Colonic mucosa (tissue), 4 donors: ENCODE measurements at regions of chrX and their contacts with region 1.

Region 1: DNA sequence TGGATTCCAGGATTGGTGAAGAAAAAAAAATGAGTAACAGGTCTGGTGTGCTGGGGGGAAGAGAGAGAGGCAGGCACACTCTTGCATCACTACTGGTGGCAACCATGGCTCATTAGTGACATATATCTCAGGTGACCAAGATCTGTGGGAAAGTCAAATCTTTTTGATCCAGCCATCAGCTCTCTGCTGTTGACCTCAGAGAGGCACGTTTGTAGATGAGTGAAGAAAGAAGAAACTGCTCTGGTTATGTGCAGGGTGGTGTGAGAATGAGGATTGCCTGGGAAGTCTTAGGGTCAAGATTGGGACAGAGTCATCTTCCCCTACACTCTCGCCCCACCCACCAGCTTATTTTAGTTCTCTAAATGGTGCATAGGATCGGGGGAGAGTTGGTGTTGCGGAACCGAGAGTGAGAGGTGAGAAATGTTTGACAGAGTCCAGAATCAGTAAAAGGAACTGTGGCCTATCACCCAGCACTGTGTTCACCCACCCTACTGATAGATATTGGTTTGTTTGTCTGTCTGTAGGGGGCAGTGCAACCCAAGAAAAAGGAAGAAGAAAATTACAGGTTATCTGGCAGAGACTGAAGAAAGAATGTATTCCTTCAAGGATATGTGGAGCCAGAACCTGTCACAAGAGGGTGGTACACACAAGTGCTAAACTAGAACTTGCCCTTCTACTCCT is 21.9 kb downstream of the ARMCX6 start:
- DNase-seq: peak; percentile 48
- H3K4me3 ChIP-seq: no peak overlapping the region
- H3K27ac ChIP-seq: no peak overlapping the region
- H3K4me1 ChIP-seq: no peaks in the 10 kb centered on the region
- H3K27me3 ChIP-seq: no peaks in the 10 kb centered on the region
- CTCF ChIP-seq: peak; percentile 39

Region 2: DNA sequence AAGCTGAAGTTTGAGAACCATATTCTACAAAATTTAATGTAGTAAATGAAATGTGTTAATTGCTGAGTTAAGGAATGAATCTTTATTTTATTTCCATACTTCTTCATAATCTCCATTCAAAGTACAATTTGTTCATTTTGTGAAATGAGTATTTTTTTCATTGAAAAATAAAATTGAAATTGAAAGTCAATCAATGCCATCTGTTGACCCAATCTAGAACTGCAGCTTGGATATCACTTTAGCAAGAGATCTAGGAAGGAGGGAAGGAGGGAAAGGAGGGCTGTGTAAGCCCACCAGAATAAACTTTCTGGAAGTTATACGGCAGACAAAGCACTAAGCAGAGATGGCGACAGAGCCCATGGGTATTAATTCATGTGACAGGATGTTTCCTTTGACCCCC is 207.6 kb after region 1 on chrX:
- intact Hi-C with region 1: loop called (anchors 5 kb)
- DNase-seq: no peak
- H3K4me3 ChIP-seq: no peak overlapping the region
- H3K27ac ChIP-seq: no peak overlapping the region
- H3K4me1 ChIP-seq: no peaks in the 10 kb centered on the region
- H3K27me3 ChIP-seq: no peaks in the 10 kb centered on the region
- CTCF ChIP-seq: peak; percentile 28

Region 3: GRCh38 chrX:102652031-102652688 is 1056.3 kb after region 1 on chrX:
- intact Hi-C with region 1: no loop called
- DNase-seq: peak; percentile 40
- H3K4me3 ChIP-seq: peak overlapping the region; percentile 39
- H3K27ac ChIP-seq: no peak overlapping the region
- H3K4me1 ChIP-seq: no peaks in the 10 kb centered on the region
- H3K27me3 ChIP-seq: no peaks in the 10 kb centered on the region
- CTCF ChIP-seq: peak; percentile 28